GM12878 (cell line): ENCODE measurements at regions of chr20 and their contacts with region 1.

Region 1: GRCh38 chr20:55057779-55058415 is 582.5 kb downstream of the DOK5 start:
- DNase-seq: no peak
- ATAC-seq: peak; percentile 82
- H3K4me3 ChIP-seq: no peak overlapping the region
- H3K27ac ChIP-seq: no peak overlapping the region
- H3K4me1 ChIP-seq: no peaks in the 10 kb centered on the region
- H3K27me3 ChIP-seq: no peaks in the 10 kb centered on the region
- CTCF ChIP-seq: peak in 2 of 3 experiments; percentile 27 to 40; a peak in 3 of 6 replicates
- EP300 ChIP-seq: no peak
- POLR2A ChIP-seq: no peak
- RAD21 ChIP-seq: no peak

Region 2: GRCh38 chr20:54624706-54625390 is 433.0 kb before region 1 on chr20:
- CTCF ChIA-PET with region 1: no interaction called
- POLR2A ChIA-PET with region 1: no interaction called
- RAD21 ChIA-PET with region 1: no interaction called
- SMC1A ChIA-PET with region 1: no interaction called
- in situ Hi-C with region 1: no loop called
- intact Hi-C with region 1: no loop called
- DNase-seq: no peak
- ATAC-seq: no peak
- H3K4me3 ChIP-seq: no peak overlapping the region
- H3K27ac ChIP-seq: no peak overlapping the region
- H3K4me1 ChIP-seq: no peaks in the 10 kb centered on the region
- H3K27me3 ChIP-seq: peaks cover 2 to 3% of the 10 kb centered on the region in 2 experiments; a peak in 3 of 4 replicates
- CTCF ChIP-seq: no peak
- EP300 ChIP-seq: no peak
- POLR2A ChIP-seq: no peak
- RAD21 ChIP-seq: no peak

Region 3: GRCh38 chr20:54980103-54980960 is 77.6 kb before region 1 on chr20:
- CTCF ChIA-PET with region 1: interaction called, 12 read pairs
- POLR2A ChIA-PET with region 1: no interaction called
- RAD21 ChIA-PET with region 1: interaction called, 9 read pairs
- SMC1A ChIA-PET with region 1: interaction called, 15 read pairs
- in situ Hi-C with region 1: no loop called
- intact Hi-C with region 1: loop called (anchors 2 kb)
- DNase-seq: no peak
- ATAC-seq: peak; percentile 75
- H3K4me3 ChIP-seq: no peak overlapping the region
- H3K27ac ChIP-seq: no peak overlapping the region
- H3K4me1 ChIP-seq: no peaks in the 10 kb centered on the region
- H3K27me3 ChIP-seq: no peaks in the 10 kb centered on the region
- CTCF ChIP-seq: peak in 2 of 3 experiments; percentile 40 to 61; a peak in 3 of 6 replicates
- EP300 ChIP-seq: no peak
- POLR2A ChIP-seq: no peak
- RAD21 ChIP-seq: no peak

Region 4: DNA sequence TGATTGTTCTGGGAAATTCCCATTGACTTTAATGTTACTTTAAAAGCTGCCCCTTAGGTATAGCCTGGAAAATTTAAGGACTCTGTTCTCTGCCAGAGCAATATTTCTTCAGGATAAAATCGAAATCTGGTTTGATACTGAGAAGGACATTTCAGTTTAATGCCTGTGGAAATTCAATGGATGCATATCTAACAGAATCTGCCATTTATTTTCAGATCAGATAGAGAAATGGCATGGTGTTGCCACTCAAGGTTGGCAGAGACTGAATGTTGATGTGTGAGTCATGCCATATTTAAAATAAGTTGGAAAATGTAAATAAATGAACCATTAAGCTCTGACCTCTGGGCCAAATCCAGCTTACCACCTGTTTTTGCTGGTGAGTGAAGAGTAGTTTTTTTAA is 12.1 kb after region 1 on chr20:
- CTCF ChIA-PET with region 1: interaction called, 5 read pairs
- POLR2A ChIA-PET with region 1: no interaction called
- RAD21 ChIA-PET with region 1: interaction called, 3 read pairs
- SMC1A ChIA-PET with region 1: interaction called, 13 read pairs
- in situ Hi-C with region 1: no loop called
- intact Hi-C with region 1: no loop called
- DNase-seq: no peak
- ATAC-seq: no peak
- H3K4me3 ChIP-seq: no peak overlapping the region
- H3K27ac ChIP-seq: no peak overlapping the region
- H3K4me1 ChIP-seq: no peaks in the 10 kb centered on the region
- H3K27me3 ChIP-seq: no peaks in the 10 kb centered on the region
- CTCF ChIP-seq: no peak
- EP300 ChIP-seq: no peak
- POLR2A ChIP-seq: no peak
- RAD21 ChIP-seq: no peak

Region 5: DNA sequence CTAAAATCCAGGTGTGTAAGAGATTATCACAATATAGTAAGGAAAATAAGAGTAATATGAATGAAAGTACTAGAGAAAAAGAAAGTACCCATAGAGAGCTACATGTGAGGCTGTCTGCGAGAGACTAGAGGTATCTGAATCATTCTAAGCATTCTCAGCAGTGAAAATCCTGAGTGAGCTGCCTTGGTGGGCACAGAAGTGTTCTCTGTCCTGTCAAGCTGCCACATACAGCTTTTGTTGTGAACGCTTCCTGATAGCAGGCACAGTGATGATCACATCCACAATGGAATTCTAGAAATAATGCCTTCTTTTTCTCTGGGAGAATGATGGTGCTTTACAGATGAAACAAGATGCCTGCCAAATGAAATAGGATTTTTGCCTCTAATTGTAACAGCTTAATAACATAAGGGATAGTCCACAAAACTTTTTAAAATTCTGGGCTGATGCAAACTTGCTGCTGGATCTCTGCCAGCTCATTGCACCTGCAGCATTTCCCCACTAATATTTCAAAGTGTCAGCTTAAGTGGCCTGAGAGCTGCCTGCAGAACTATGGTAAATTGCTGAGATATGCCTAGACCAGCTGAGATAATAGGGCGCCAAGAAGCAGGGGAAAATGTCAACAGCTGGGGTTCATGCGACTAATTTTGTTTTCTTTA is 38.0 kb after region 1 on chr20:
- CTCF ChIA-PET with region 1: interaction called, 4 read pairs
- POLR2A ChIA-PET with region 1: no interaction called
- RAD21 ChIA-PET with region 1: no interaction called
- SMC1A ChIA-PET with region 1: interaction called, 10 read pairs
- in situ Hi-C with region 1: no loop called
- intact Hi-C with region 1: no loop called
- DNase-seq: no peak
- ATAC-seq: no peak
- H3K4me3 ChIP-seq: no peak overlapping the region
- H3K27ac ChIP-seq: no peak overlapping the region
- H3K4me1 ChIP-seq: no peaks in the 10 kb centered on the region
- H3K27me3 ChIP-seq: no peaks in the 10 kb centered on the region
- CTCF ChIP-seq: no peak
- EP300 ChIP-seq: no peak
- POLR2A ChIP-seq: no peak
- RAD21 ChIP-seq: no peak

Region 6: GRCh38 chr20:55116598-55116997 is 58.7 kb after region 1 on chr20:
- CTCF ChIA-PET with region 1: interaction called, 10 read pairs
- POLR2A ChIA-PET with region 1: interaction called, 5 read pairs
- RAD21 ChIA-PET with region 1: interaction called, 4 read pairs
- SMC1A ChIA-PET with region 1: interaction called, 9 read pairs
- in situ Hi-C with region 1: no loop called
- intact Hi-C with region 1: loop called (anchors 5 kb)
- DNase-seq: peak; percentile 25
- ATAC-seq: peak; percentile 74
- H3K4me3 ChIP-seq: no peak overlapping the region
- H3K27ac ChIP-seq: no peak overlapping the region
- H3K4me1 ChIP-seq: no peaks in the 10 kb centered on the region
- H3K27me3 ChIP-seq: no peaks in the 10 kb centered on the region
- CTCF ChIP-seq: no peak
- EP300 ChIP-seq: no peak
- POLR2A ChIP-seq: no peak
- RAD21 ChIP-seq: no peak

Region 7: GRCh38 chr20:55172310-55172995 is 114.6 kb after region 1 on chr20:
- CTCF ChIA-PET with region 1: interaction called, 3 read pairs
- POLR2A ChIA-PET with region 1: no interaction called
- RAD21 ChIA-PET with region 1: no interaction called
- SMC1A ChIA-PET with region 1: interaction called, 11 read pairs
- in situ Hi-C with region 1: no loop called
- intact Hi-C with region 1: no loop called
- DNase-seq: no peak
- ATAC-seq: no peak
- H3K4me3 ChIP-seq: no peak overlapping the region
- H3K27ac ChIP-seq: no peak overlapping the region
- H3K4me1 ChIP-seq: no peaks in the 10 kb centered on the region
- H3K27me3 ChIP-seq: no peaks in the 10 kb centered on the region
- CTCF ChIP-seq: no peak
- EP300 ChIP-seq: no peak
- POLR2A ChIP-seq: no peak
- RAD21 ChIP-seq: no peak

Region 8: GRCh38 chr20:55269913-55270312 is 212.0 kb after region 1 on chr20:
- CTCF ChIA-PET with region 1: interaction called, 3 read pairs
- POLR2A ChIA-PET with region 1: no interaction called
- RAD21 ChIA-PET with region 1: no interaction called
- SMC1A ChIA-PET with region 1: interaction called, 7 read pairs
- in situ Hi-C with region 1: no loop called
- intact Hi-C with region 1: loop called (anchors 10 kb)
- DNase-seq: no peak
- ATAC-seq: no peak
- H3K4me3 ChIP-seq: no peak overlapping the region
- H3K27ac ChIP-seq: no peak overlapping the region
- H3K4me1 ChIP-seq: no peaks in the 10 kb centered on the region
- H3K27me3 ChIP-seq: no peaks in the 10 kb centered on the region
- CTCF ChIP-seq: no peak
- EP300 ChIP-seq: no peak
- POLR2A ChIP-seq: no peak
- RAD21 ChIP-seq: no peak